Naive thymus-derived CD4-positive, alpha-beta T cell (primary cell): ENCODE measurements at regions of chr4 and their contacts with region 1.

Region 1: GRCh38 chr4:177047070-177047850 is 254.5 kb upstream of the VEGFC start:
- DNase-seq: peak in 8 of 9 donors; percentile 8 to 55 (median 28)
- ATAC-seq: peak; percentile 83
- H3K4me3 ChIP-seq: no peak overlapping the region
- H3K4me3 Mint-ChIP-seq: no peak overlapping the region
- H3K27ac ChIP-seq: no peak overlapping the region
- H3K27ac Mint-ChIP-seq: no peak overlapping the region
- H3K4me1 ChIP-seq: no peaks in the 10 kb centered on the region
- H3K4me1 Mint-ChIP-seq: no peaks in the 10 kb centered on the region
- H3K27me3 ChIP-seq: no peaks in the 10 kb centered on the region
- H3K27me3 Mint-ChIP-seq: peaks cover 5 to 22% (median 10%) of the 10 kb centered on the region in 5 donors

Region 2: DNA sequence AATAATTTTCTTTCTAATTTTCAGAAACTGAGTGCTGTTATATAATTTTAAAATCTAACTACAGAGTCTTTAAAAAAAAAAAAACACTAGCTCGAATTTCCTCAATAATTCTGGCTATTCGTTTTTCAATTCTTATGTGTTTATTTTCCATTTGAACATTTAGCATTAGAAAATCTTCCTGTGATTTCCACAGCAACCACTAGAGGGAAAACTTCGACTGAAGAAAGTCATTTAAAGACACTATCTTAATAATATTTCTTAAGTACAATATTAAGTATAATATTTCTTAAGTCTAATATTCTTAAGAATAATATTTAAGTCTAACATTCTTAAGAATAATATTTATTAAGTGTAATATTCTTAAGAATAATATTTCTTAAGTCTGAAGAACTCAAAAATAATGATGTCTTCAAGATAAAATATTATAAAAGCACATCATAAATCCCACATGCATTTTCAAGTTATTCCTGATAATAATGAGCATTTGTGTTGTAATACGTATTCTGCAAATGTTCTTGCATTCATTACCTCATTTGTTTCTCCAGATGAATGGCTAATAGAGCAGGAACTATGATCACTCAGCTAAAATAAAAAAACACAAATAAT is 1100.0 kb before region 1 on chr4:
- CTCF ChIA-PET with region 1: no interaction called
- POLR2A ChIA-PET with region 1: no interaction called
- intact Hi-C with region 1: loop called in 1 of 2 experiments (anchors 2 kb)
- DNase-seq: peak in 3 of 9 donors; percentile 1 to 8 (median 4)
- ATAC-seq: no peak
- H3K4me3 ChIP-seq: no peak overlapping the region
- H3K4me3 Mint-ChIP-seq: peak overlapping the region in 1 of 10 donors; percentile 44
- H3K27ac ChIP-seq: no peak overlapping the region
- H3K27ac Mint-ChIP-seq: no peak overlapping the region
- H3K4me1 ChIP-seq: peaks cover 0 to 3% of the 10 kb centered on the region in 2 donors
- H3K4me1 Mint-ChIP-seq: peaks cover 0 to 10% (median 6%) of the 10 kb centered on the region in 7 donors
- H3K27me3 ChIP-seq: no peaks in the 10 kb centered on the region
- H3K27me3 Mint-ChIP-seq: peaks cover 10 to 27% (median 13%) of the 10 kb centered on the region in 5 donors

Region 3: DNA sequence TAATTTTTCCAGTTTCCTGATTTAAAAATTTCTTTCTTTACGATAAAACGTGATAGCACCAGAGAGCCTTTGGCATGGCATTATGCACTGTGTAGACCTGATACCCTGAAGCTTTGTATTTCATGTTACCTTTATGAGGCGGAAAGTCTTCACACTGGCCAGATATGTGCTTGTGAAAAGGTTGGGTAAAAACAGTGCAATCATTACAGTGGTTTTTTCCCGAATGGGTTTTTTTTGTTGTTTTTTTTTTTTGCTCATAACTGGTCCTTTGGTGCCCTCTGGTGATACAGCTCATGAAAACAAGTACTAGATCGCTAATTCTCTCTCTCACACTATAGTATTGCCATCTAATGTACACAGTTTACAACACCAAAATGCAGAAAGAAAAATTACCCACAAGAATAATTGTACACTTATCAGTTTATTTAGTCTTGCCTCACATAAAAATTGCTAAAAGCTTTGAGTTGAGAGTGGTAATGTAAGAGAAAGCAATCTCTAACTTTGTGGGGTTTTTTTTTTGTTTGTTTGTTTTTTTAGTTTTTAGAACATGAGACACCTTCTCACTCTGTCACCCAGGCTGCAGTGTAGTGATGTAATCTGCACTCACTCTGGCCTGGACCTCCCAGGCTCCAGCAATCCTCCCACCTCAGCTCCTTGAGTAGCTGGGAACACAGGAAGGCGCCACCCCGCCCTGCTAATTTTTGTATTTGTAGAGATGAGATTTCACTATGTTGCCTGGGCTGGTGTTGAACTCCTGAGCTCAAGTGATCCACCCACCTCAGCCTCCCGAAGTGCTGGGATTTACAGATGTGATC is 706.2 kb before region 1 on chr4:
- CTCF ChIA-PET with region 1: no interaction called
- POLR2A ChIA-PET with region 1: no interaction called
- intact Hi-C with region 1: loop called in 1 of 2 experiments (anchors 10 kb)
- DNase-seq: peak in 5 of 9 donors; percentile 37 to 52 (median 39)
- ATAC-seq: peak; percentile 73
- H3K4me3 ChIP-seq: no peak overlapping the region
- H3K4me3 Mint-ChIP-seq: no peak overlapping the region
- H3K27ac ChIP-seq: no peak overlapping the region
- H3K27ac Mint-ChIP-seq: no peak overlapping the region
- H3K4me1 ChIP-seq: peaks cover 0 to 6% of the 10 kb centered on the region in 2 donors
- H3K4me1 Mint-ChIP-seq: peaks cover 0 to 24% (median 5%) of the 10 kb centered on the region in 7 donors
- H3K27me3 ChIP-seq: no peaks in the 10 kb centered on the region
- H3K27me3 Mint-ChIP-seq: no peaks in the 10 kb centered on the region

Region 4: GRCh38 chr4:176377780-176378179 is 669.5 kb before region 1 on chr4:
- CTCF ChIA-PET with region 1: no interaction called
- POLR2A ChIA-PET with region 1: no interaction called
- intact Hi-C with region 1: loop called in 1 of 2 experiments (anchors 1 kb)
- DNase-seq: peak in 1 of 9 donors; percentile 1
- ATAC-seq: no peak
- H3K4me3 ChIP-seq: no peak overlapping the region
- H3K4me3 Mint-ChIP-seq: no peak overlapping the region
- H3K27ac ChIP-seq: no peak overlapping the region
- H3K27ac Mint-ChIP-seq: no peak overlapping the region
- H3K4me1 ChIP-seq: no peaks in the 10 kb centered on the region
- H3K4me1 Mint-ChIP-seq: peaks cover 0 to 3% (median 0%) of the 10 kb centered on the region in 7 donors
- H3K27me3 ChIP-seq: no peaks in the 10 kb centered on the region
- H3K27me3 Mint-ChIP-seq: peaks cover 0 to 19% (median 0%) of the 10 kb centered on the region in 5 donors

Region 5: GRCh38 chr4:176526704-176527103 is 520.6 kb before region 1 on chr4:
- CTCF ChIA-PET with region 1: no interaction called
- POLR2A ChIA-PET with region 1: no interaction called
- intact Hi-C with region 1: no loop called
- DNase-seq: no peak
- ATAC-seq: no peak
- H3K4me3 ChIP-seq: no peak overlapping the region
- H3K4me3 Mint-ChIP-seq: no peak overlapping the region
- H3K27ac ChIP-seq: no peak overlapping the region
- H3K27ac Mint-ChIP-seq: no peak overlapping the region
- H3K4me1 ChIP-seq: no peaks in the 10 kb centered on the region
- H3K4me1 Mint-ChIP-seq: no peaks in the 10 kb centered on the region
- H3K27me3 ChIP-seq: no peaks in the 10 kb centered on the region
- H3K27me3 Mint-ChIP-seq: no peaks in the 10 kb centered on the region

Region 6: DNA sequence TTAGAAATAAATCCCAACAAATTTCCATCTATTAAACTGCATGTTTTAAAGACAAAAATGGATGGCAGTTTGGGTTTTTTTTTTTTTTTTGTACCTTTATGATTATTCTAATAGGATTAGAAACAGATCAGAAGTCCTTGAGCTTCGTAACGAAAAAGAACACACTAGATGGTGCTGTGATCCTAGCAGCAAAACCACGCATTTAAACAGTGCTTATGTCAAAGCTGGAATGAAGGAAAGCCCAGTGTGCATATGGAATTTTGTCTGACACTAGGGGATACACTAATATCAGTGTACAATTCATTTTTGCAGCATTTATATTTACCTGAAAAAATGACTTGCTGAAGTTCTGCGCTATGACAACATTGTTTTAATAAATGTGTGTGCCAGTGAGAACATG is 483.7 kb before region 1 on chr4:
- CTCF ChIA-PET with region 1: no interaction called
- POLR2A ChIA-PET with region 1: no interaction called
- intact Hi-C with region 1: no loop called
- DNase-seq: no peak
- ATAC-seq: no peak
- H3K4me3 ChIP-seq: no peak overlapping the region
- H3K4me3 Mint-ChIP-seq: no peak overlapping the region
- H3K27ac ChIP-seq: no peak overlapping the region
- H3K27ac Mint-ChIP-seq: no peak overlapping the region
- H3K4me1 ChIP-seq: no peaks in the 10 kb centered on the region
- H3K4me1 Mint-ChIP-seq: no peaks in the 10 kb centered on the region
- H3K27me3 ChIP-seq: no peaks in the 10 kb centered on the region
- H3K27me3 Mint-ChIP-seq: peaks cover 0 to 5% (median 0%) of the 10 kb centered on the region in 5 donors

Region 7: DNA sequence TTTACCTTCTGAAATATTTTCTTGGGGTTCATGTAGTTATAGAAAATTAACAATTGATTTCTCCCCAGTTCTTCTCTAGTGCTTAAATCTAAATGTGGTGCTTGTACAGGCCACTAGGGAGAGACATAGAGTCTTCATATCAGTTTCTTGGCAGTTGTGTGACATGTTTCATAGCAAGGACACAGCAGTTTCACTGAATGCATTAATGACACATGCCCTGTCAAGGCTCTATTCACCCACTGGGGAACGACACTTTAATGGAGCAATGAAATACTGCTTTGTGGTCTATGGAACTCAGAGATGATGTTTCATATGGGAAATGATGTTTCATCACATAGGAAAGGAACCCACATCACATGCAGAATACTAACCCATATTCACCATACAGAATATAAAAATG is 257.3 kb before region 1 on chr4:
- CTCF ChIA-PET with region 1: no interaction called
- POLR2A ChIA-PET with region 1: no interaction called
- intact Hi-C with region 1: loop called in 1 of 2 experiments (anchors 1 kb)
- DNase-seq: no peak
- ATAC-seq: no peak
- H3K4me3 ChIP-seq: no peak overlapping the region
- H3K4me3 Mint-ChIP-seq: no peak overlapping the region
- H3K27ac ChIP-seq: no peak overlapping the region
- H3K27ac Mint-ChIP-seq: no peak overlapping the region
- H3K4me1 ChIP-seq: no peaks in the 10 kb centered on the region
- H3K4me1 Mint-ChIP-seq: peaks cover 0 to 20% (median 10%) of the 10 kb centered on the region in 7 donors
- H3K27me3 ChIP-seq: peaks cover 0 to 5% of the 10 kb centered on the region in 2 donors
- H3K27me3 Mint-ChIP-seq: peaks cover 43 to 57% (median 48%) of the 10 kb centered on the region in 5 donors

Region 8: GRCh38 chr4:177033135-177033534 is 14.1 kb before region 1 on chr4:
- CTCF ChIA-PET with region 1: no interaction called
- POLR2A ChIA-PET with region 1: no interaction called
- intact Hi-C with region 1: no loop called
- DNase-seq: no peak
- ATAC-seq: no peak
- H3K4me3 ChIP-seq: no peak overlapping the region
- H3K4me3 Mint-ChIP-seq: no peak overlapping the region
- H3K27ac ChIP-seq: no peak overlapping the region
- H3K27ac Mint-ChIP-seq: no peak overlapping the region
- H3K4me1 ChIP-seq: no peaks in the 10 kb centered on the region
- H3K4me1 Mint-ChIP-seq: no peaks in the 10 kb centered on the region
- H3K27me3 ChIP-seq: no peaks in the 10 kb centered on the region
- H3K27me3 Mint-ChIP-seq: peaks cover 0 to 7% (median 0%) of the 10 kb centered on the region in 5 donors

Region 9: DNA sequence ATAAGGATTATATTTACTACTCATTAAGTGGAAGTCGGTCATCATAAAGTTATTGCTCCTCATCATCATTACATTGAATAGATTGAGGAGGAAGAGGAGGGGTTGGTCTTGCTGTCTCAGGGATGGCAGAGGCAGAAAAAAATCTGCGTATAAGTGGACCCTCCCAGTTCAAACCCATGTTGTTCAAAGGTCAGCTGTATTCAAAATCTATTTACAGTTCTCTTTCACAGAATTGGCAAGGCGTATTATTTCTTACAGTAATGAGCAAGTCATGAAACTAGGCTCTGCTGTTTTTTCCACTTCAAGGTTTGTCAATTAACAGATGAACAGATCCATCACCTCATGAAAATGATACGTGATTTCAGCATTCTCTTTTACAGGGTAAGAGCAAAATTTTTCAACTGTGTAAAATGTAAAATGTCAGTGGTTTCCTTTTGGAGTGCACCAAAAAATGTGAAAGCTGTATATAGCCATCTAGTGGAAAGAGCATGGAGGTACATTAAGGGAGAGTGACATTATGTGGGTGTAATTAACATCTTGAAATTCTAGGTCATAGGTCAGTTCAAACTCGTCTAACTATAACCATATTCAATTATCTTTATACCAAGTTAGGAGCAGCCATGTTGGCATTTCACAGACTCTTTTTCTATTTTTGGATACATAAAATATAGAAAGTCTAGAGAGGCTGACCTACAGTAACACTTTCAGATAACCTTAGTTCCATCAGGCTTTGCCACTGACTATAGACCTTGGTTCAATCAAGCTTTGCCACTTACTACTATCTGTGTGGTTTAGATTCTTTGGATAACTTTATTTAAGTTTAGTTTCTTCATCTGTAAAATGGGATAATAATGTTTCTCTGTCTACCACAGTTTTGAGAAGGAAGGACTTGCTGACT is 292.5 kb after region 1 on chr4:
- CTCF ChIA-PET with region 1: interaction called, 3 read pairs
- POLR2A ChIA-PET with region 1: no interaction called
- intact Hi-C with region 1: loop called in 1 of 2 experiments (anchors 1 kb)
- DNase-seq: peak in 6 of 9 donors; percentile 5 to 46 (median 32)
- ATAC-seq: peak; percentile 92
- H3K4me3 ChIP-seq: no peak overlapping the region
- H3K4me3 Mint-ChIP-seq: peak overlapping the region in 1 of 10 donors; percentile 56
- H3K27ac ChIP-seq: no peak overlapping the region
- H3K27ac Mint-ChIP-seq: peak overlapping the region in 1 of 9 donors; percentile 64
- H3K4me1 ChIP-seq: no peaks in the 10 kb centered on the region
- H3K4me1 Mint-ChIP-seq: peaks cover 0 to 22% (median 0%) of the 10 kb centered on the region in 7 donors
- H3K27me3 ChIP-seq: no peaks in the 10 kb centered on the region
- H3K27me3 Mint-ChIP-seq: no peaks in the 10 kb centered on the region

Region 10: DNA sequence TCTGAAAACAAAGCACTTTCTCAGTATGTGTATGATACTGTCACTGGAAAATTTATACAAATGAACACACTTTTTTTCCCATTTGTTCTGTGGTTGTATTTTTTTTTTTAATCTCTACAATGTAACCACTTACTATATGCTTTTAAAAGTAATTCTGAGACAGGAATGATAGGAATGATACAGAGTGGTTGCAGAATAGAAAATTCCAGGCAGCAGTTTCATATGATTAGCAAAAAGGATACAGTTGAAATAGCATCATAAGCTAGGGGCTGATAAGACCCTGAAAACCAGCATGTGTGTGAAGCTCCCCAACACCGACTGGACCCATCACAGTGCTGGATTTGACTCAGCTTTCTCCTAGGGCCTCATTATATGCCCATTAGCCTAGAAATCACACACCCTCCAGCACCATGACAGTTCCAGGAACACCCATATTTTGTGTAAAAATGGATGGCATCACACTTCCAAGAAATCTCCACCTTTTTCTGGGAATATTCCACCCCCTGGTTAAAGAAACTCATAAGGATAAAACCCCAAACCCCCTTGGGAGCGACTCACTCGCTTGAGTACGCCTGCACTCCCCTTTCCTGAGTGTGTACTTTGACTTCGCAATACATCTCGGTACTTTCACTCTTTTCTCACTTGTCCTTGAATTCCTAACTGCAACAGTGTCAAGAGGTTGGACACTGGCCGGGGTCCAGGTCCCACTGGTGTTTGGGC is 472.4 kb after region 1 on chr4:
- CTCF ChIA-PET with region 1: no interaction called
- POLR2A ChIA-PET with region 1: no interaction called
- intact Hi-C with region 1: no loop called
- DNase-seq: no peak
- ATAC-seq: no peak
- H3K4me3 ChIP-seq: no peak overlapping the region
- H3K4me3 Mint-ChIP-seq: no peak overlapping the region
- H3K27ac ChIP-seq: no peak overlapping the region
- H3K27ac Mint-ChIP-seq: no peak overlapping the region
- H3K4me1 ChIP-seq: no peaks in the 10 kb centered on the region
- H3K4me1 Mint-ChIP-seq: no peaks in the 10 kb centered on the region
- H3K27me3 ChIP-seq: no peaks in the 10 kb centered on the region
- H3K27me3 Mint-ChIP-seq: no peaks in the 10 kb centered on the region